ENCODE measurements at regions of chr3 and their contacts with region 1.

Region 1: GRCh38 chr3:167669699-167670098 is 16.0 kb upstream of the WDR49 start:
- DNase-seq: no peak
- H3K4me3 ChIP-seq: no peak overlapping the region
- H3K27ac ChIP-seq: no peak overlapping the region
- H3K4me1 ChIP-seq: no peaks in the 10 kb centered on the region
- H3K27me3 ChIP-seq: no peaks in the 10 kb centered on the region
- CTCF ChIP-seq: no peak

Region 2: GRCh38 chr3:167406875-167407492 is 262.7 kb before region 1 on chr3:
- intact Hi-C with region 1: loop called (anchors 10 kb)
- DNase-seq: no peak
- H3K4me3 ChIP-seq: no peak overlapping the region
- H3K27ac ChIP-seq: no peak overlapping the region
- H3K4me1 ChIP-seq: no peaks in the 10 kb centered on the region
- H3K27me3 ChIP-seq: no peaks in the 10 kb centered on the region
- CTCF ChIP-seq: peak; percentile 55

Region 3: GRCh38 chr3:167716920-167717319 is 47.2 kb after region 1 on chr3:
- intact Hi-C with region 1: no loop called
- DNase-seq: no peak
- H3K4me3 ChIP-seq: no peak overlapping the region
- H3K27ac ChIP-seq: peak overlapping the region; percentile 25
- H3K4me1 ChIP-seq: peaks cover 27% of the 10 kb centered on the region
- H3K27me3 ChIP-seq: no peaks in the 10 kb centered on the region
- CTCF ChIP-seq: no peak

Region 4: DNA sequence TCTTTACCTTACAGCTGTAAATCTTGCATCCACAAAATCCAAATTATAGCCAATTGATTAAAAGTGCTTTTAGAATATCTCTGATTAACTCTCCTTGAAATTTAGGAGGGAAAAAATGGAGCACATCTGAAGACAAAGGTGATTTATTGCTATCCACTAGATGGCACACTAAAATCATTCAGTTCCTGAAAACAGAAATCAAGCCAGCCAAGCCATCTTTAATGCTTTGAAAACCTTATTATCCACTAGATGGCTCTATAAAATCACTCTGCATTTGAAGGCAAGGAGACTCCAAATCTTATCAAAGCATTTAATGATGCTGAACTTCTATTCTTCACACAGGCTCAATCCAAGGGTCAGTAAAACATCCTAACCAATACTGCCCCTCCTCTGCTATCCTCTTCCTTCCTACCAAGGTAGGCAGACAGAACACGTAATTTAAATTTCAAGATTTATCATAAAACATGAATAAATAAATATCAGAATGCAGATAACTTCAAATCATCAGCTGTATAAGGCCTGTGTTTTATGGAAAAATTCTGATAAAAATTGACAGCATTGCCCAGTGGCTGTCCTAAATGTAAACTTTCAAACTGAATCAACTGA is 377.6 kb after region 1 on chr3:
- intact Hi-C with region 1: no loop called
- DNase-seq: no peak
- H3K4me3 ChIP-seq: no peak overlapping the region
- H3K27ac ChIP-seq: no peak overlapping the region
- H3K4me1 ChIP-seq: peaks cover 68% of the 10 kb centered on the region
- H3K27me3 ChIP-seq: no peaks in the 10 kb centered on the region
- CTCF ChIP-seq: peak; percentile 94

Measured in left ventricle myocardium inferior (tissue), 1 donor.